Adrenal gland (tissue), 19 donors: ENCODE measurements at regions of chr10 and their contacts with region 1.

Region 1: GRCh38 chr10:132458593-132459300 is 61.7 kb downstream of the PWWP2B start:
- DNase-seq: peak; percentile 32 to 71 (median 61)
- H3K4me3 ChIP-seq: no peak overlapping the region
- H3K27ac ChIP-seq: no peak overlapping the region
- H3K4me1 ChIP-seq: peaks cover 0 to 3% of the 10 kb centered on the region in 2 donors
- H3K27me3 ChIP-seq: no peaks in the 10 kb centered on the region
- CTCF ChIP-seq: peak; percentile 88 to 96 (median 95)
- POLR2A ChIP-seq: no peak

Region 2: DNA sequence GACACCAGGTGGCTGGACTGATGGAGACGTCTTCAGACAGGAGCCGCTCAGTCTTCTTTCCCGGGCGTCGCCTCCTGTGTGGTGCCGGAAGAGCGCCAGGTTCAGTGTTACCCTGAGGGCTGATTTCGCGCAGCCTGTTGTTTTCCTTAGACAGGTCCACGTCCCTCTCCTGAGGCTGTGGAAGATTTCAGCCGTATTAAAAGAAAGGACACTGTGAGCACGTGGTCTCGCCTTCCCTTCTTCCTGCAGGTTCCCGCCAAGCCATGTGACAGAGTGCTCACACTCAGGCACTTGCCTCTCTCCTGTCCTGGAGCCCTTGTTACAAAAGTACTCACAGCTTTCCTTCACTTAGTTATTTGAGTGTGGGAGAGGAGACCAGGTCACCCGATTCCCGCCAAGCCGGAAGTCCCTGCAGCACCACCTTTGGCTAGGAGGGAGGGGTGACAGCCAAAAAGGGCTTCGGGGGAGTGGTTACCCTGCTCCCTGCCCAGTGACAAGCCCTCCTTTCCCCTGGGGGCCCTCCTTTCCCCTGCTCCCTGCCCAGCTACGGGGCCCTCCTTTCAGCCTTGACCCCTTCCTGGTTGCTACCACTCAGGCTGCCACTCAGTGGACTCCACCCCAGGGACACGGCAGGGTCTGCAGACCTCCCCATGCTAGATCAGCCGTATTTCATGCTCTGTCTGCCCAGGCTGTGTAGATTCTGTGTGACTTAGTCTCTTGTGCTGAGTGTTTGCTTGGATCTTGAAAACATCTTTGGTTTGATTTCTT is 83.3 kb before region 1 on chr10:
- intact Hi-C with region 1: no loop called
- DNase-seq: peak in 2 of 7 donors; percentile 7 to 8
- H3K4me3 ChIP-seq: no peak overlapping the region
- H3K27ac ChIP-seq: no peak overlapping the region
- H3K4me1 ChIP-seq: no peaks in the 10 kb centered on the region
- H3K27me3 ChIP-seq: no peaks in the 10 kb centered on the region
- CTCF ChIP-seq: no peak
- POLR2A ChIP-seq: no peak

Region 3: DNA sequence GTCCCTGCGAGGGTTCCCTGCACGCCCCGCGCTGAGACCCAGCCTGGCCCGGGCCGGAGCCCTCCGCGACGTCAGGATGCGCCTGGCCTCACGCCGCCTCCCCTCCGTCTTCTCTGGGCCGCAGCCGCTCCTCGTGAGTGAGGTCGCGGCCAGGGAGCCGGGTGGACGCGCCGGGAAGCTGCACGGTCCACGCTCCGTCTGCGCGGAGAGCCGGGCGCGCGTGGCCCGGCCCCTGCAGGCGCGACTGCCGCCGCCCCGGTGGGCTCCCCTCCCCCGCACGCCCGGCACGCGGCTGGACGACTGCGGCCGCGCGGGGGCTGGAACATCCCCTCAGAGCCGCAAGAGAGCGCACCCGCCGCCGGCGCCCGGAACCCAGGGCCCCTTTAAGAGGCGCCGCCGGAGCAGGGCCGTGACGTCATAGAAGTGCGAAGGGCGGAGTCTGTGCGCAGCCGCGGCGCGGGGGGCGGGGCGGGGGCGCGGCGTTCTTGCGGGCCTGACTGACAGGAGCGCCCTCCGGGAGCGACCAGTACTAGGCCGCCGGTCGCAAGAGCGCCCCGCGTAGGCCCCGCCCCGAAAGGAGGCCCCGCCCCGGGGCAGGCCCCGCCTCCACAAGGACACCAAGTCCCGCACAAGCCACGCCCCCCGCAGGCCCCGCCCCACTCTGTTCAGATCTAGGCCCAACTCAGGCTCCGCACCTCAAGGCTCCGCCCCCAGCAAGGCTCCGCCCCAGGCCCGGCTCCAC is 78.4 kb after region 1 on chr10:
- intact Hi-C with region 1: loop called in 1 of 2 experiments (anchors 5 kb)
- DNase-seq: peak; percentile 100
- H3K4me3 ChIP-seq: peak overlapping the region in 2 of 4 donors; percentile 52 to 78
- H3K27ac ChIP-seq: peak overlapping the region in 4 of 5 donors; percentile 74 to 90 (median 82)
- H3K4me1 ChIP-seq: peaks cover 26 to 46% of the 10 kb centered on the region in 2 donors
- H3K27me3 ChIP-seq: no peaks in the 10 kb centered on the region
- CTCF ChIP-seq: peak in 3 of 6 experiments; percentile 35 to 52 (median 41)
- POLR2A ChIP-seq: peak; percentile 47 to 58

Region 4: DNA sequence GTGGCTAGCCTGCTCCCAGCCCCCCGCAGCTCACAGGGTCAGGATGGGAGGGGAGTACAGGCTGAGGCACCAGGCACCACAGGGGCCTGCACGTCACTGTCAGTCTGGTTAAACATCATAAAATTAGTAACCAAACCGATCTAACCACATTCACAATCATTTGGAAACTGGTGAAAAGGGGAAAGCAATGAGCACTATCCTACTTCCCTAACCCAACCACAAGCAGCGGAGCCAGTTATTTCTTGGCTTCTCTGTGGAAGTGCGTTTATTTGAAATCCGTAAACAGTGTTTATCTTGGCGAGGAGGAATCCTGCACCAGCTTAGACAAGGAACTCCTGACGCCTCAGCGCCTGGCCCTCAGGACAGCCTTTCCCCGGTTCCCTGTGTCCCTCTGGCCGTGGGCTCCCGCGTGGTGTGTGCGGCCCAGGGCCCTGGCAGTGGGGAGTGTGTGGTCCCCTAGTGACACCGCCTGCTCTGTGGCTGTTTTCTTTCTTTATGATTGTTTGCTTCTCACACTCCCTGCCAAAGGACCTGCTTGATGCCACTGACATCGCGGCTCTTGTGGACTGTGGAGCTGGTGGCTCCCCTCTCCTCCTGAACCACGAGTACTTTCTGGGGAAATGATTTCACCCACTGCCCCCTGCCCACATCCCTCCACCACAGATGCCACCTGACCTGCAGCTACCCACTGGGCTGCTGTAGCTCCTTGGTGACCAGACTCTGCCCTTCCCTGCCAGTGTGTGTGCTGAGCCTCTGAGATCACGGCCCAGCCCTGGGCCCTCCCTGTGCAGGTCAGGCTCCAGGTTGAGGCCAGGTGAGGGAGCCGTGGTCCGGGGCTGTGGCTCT is 116.8 kb after region 1 on chr10:
- intact Hi-C with region 1: loop called in 1 of 2 experiments (anchors 5 kb)
- DNase-seq: peak in 2 of 7 donors; percentile 42 to 43
- H3K4me3 ChIP-seq: no peak overlapping the region
- H3K27ac ChIP-seq: peak overlapping the region in 2 of 5 donors; percentile 41 to 46
- H3K4me1 ChIP-seq: peaks cover 3 to 51% of the 10 kb centered on the region in 2 donors
- H3K27me3 ChIP-seq: no peaks in the 10 kb centered on the region
- CTCF ChIP-seq: no peak
- POLR2A ChIP-seq: no peak

Region 5: DNA sequence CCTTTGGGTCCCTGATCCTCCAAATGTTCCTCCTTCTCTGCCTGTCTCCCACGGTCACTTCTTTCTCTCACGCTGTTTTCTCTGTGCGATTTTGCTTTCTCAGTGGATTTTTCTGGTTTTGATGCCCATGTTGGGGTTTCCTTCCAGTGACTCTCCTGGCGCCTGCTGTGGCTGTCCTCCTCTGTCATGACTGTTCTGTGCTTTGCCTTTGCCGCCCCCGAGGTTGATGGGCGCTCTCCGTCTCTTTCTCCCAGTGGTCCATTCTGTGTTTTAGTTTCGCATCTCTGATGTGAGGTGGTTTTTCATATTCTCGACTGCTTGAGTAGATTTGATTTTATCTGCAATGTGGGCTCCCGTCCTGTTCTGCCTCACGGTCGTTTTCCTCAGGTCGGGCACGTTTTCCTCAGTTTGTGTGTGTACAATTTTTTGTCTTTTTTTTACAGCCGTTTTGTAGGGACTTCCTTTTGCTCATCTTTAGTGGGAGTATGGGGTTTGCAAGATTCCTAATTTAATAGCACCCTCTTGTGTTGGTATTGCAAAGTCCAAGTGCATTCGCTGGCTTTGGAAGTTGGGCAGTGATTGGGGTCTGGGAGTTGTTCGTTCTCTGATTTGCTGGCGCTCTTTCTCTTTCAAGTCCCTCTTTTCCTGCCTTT is 178.9 kb after region 1 on chr10:
- intact Hi-C with region 1: loop called (anchors 2 to 5 kb)
- DNase-seq: peak in 4 of 7 donors; percentile 18 to 29 (median 22)
- H3K4me3 ChIP-seq: no peak overlapping the region
- H3K27ac ChIP-seq: peak overlapping the region in 1 of 5 donors; percentile 1
- H3K4me1 ChIP-seq: peaks cover 0 to 28% of the 10 kb centered on the region in 2 donors
- H3K27me3 ChIP-seq: no peaks in the 10 kb centered on the region
- CTCF ChIP-seq: peak; percentile 64 to 94 (median 80)
- POLR2A ChIP-seq: no peak

Region 6: GRCh38 chr10:132643709-132644526 is 185.2 kb after region 1 on chr10:
- intact Hi-C with region 1: loop called in 1 of 2 experiments (anchors 5 kb)
- DNase-seq: no peak
- H3K4me3 ChIP-seq: no peak overlapping the region
- H3K27ac ChIP-seq: no peak overlapping the region
- H3K4me1 ChIP-seq: no peaks in the 10 kb centered on the region
- H3K27me3 ChIP-seq: no peaks in the 10 kb centered on the region
- CTCF ChIP-seq: no peak
- POLR2A ChIP-seq: no peak